Activated naive CD4-positive, alpha-beta T cell treated with anti-CD3 and anti-CD28 coated beads, Interleukin-2, amount 10 ng/mL, durations not matched to agents 7 days and 5 days (primary cell): ENCODE measurements at regions of chr16 and their contacts with region 1.

Region 1: DNA sequence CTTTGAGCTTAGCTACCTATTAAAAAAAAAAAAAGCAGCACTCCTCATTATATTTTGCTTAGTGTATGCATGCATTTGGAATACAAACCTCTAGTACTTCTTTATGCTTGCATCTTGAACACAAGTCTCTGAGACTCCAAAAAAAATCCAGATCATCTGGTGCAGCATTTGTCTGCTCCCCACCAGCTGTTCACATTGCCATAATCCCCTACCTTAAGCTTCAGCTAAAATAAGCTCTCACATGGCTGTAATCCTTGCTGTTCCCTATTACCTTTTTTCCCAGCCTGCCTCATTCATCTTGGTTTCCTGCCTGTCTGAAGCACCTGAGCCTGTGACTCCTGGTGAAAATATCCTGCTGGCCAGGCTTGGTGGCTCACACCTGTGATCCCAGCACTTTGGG is 7.5 kb upstream of the NFATC2IP start:
- DNase-seq: no peak
- H3K4me3 Mint-ChIP-seq: no peak overlapping the region
- H3K27ac Mint-ChIP-seq: no peak overlapping the region
- H3K4me1 Mint-ChIP-seq: peaks cover 20% of the 10 kb centered on the region
- H3K27me3 Mint-ChIP-seq: peaks cover 25% of the 10 kb centered on the region

Region 2: DNA sequence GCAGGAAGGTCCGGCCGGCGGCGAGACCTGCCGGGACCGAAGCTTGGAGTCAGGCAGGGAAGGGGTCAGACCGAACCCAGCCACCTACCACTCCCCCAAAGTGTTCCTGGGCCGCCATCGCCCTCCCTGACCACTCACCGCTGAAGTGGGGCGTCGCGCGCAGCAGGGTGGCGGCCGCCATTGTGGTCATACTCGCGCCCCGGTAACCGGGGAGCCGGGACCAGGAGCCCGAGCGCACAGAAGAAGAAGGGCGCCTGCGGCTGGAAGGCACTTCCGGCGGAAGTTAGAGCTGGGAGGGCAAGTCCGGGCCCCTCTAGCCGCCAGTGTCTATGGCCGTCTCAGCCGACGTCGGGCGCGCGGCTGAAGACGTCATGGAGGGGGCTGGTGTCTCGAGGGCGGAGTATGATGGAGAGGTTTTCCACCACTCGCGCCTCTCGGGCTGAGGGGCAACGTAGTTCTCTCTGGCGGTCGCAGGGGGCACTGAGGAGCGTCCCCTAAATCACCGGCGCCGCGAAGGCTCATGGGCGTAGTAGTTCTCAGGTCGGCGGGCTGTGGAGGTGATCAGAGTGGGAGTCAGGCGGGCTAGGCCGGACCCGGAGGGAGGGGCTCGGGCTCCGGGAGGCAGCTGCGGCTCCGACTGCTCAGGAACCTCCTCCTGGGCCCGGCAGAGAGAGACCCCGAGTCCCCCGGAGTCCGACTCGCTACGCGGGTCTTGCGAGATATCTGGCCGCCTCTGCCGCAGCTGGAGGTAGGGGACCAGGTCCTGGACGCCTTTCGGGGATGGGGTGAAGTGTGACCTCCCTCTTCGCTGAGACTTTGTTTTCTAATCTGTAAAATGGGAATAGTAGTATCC is 97.0 kb before region 1 on chr16 and contains the start of gene TUFM:
- CTCF ChIA-PET with region 1: interaction called, 10 read pairs
- DNase-seq: peak; percentile 99
- H3K4me3 Mint-ChIP-seq: peak within 1 kb of the TSS; percentile 90
- H3K27ac Mint-ChIP-seq: peak within 1 kb of the TSS; percentile 93
- H3K4me1 Mint-ChIP-seq: peaks cover 33% of the 10 kb centered on the region
- H3K27me3 Mint-ChIP-seq: no peaks in the 10 kb centered on the region

Region 3: DNA sequence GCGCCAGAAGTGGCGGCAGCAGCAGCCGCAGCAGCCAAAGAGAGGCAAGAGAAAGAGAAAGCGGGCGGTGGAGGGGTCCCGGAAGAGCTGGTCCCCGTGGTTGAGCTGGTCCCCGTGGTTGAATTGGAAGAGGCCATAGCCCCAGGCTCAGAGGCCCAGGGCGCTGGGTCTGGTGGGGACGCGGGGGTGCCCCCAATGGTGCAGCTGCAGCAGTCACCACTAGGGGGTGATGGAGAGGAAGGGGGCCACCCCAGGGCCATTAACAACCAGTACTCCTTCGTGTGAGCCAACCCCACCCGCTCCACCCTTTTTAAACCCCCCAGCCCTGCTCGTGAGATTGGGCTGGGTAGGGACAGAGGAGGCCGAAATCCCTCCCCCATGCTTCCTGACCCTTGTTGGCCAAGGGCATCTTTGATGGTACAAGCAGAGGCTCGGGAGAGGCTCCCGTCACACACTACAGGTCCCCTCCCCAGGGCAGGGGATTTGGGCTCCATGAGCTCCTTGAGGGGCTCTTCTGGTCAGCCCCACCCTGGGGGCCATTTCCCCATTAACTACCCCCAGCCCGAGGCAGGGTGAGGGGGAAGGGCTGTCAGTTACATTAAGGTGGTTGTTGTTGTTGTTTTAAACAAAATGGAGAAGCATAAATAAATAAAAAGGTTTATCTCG is 69.6 kb before region 1 on chr16:
- CTCF ChIA-PET with region 1: interaction called, 66 read pairs
- DNase-seq: peak; percentile 70
- H3K4me3 Mint-ChIP-seq: no peak overlapping the region
- H3K27ac Mint-ChIP-seq: no peak overlapping the region
- H3K4me1 Mint-ChIP-seq: peaks cover 11% of the 10 kb centered on the region
- H3K27me3 Mint-ChIP-seq: no peaks in the 10 kb centered on the region

Region 4: DNA sequence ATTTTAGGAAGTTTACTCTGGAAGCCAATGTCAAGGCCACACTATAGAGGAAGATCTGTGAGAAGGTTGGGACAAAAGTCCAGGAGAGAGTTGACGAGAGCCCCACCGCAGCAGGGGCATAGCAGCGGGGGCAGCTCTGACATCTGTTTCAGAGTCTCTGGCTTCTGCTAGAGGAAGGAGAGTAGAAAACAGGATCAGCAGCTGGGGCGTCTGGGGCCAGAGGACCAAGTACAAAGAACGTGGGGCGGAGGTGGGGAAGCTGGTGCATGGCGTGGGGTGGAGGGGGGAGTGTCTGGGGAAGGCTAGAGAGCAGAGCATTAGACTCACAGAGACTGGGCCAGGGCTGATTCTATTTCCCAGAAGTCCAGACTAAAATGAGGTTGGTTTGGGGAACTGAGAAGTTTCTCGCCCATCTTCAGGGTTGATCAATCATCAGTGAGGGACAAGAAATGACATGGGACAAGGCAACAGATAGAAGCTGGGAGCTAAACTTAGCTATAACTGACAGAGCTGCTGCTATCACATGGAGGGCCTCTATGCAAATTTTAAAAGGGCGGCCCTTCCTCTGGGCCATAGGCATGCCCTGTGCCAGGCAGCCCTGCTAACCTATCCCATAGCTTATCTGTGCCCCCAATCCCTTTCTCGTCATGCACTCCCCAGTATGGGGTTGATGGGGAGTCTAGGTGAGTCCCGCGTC is 19.4 kb before region 1 on chr16:
- CTCF ChIA-PET with region 1: interaction called, 10 read pairs
- DNase-seq: no peak
- H3K4me3 Mint-ChIP-seq: peak overlapping the region; percentile 94
- H3K27ac Mint-ChIP-seq: peak overlapping the region; percentile 99
- H3K4me1 Mint-ChIP-seq: peaks cover 25% of the 10 kb centered on the region
- H3K27me3 Mint-ChIP-seq: no peaks in the 10 kb centered on the region